A549 (cell line): ENCODE measurements at regions of chr3 and their contacts with region 1.

Region 1: DNA sequence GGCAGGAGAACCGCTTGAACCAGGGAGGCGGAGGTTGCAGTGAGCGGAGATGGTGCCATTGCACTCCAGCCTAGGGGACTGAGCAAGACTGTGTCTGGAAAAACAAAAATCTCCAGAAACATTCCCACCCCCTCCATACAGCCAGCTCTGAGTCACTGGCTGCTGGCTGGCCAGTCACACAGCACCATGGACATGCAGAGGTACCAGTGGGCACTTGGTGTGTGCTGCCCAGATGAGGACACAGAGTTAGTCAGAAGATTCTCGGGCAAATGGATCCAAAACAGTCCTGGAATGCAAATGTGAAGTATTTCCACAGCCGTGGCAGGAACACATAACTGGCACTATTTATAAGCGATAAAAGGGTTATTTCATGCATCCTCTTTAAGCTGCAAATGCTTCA is 44.6 kb downstream of the BDH1 start:
- DNase-seq: no peak
- ATAC-seq: peak in 1 of 2 experiments; percentile 9; a peak in 2 of 6 replicates
- H3K4me3 ChIP-seq: no peak overlapping the region
- H3K27ac ChIP-seq: peak overlapping the region; percentile 17 to 87; a peak in 2 of 6 replicates
- H3K4me1 ChIP-seq: peaks cover 19% of the 10 kb centered on the region; the same call in 2 of the 3 replicates
- CTCF ChIP-seq: no peak
- EP300 ChIP-seq: no peak
- POLR2A ChIP-seq: no peak
- RAD21 ChIP-seq: no peak

Region 2: GRCh38 chr3:197224034-197224444 is 287.1 kb before region 1 on chr3:
- CTCF ChIA-PET with region 1: interaction called, 12 read pairs
- POLR2A ChIA-PET with region 1: no interaction called
- DNase-seq: peak; percentile 39 to 50
- ATAC-seq: peak; percentile 50 to 75; a peak in 4 of 6 replicates
- H3K4me3 ChIP-seq: no peak overlapping the region
- H3K27ac ChIP-seq: no peak overlapping the region
- H3K4me1 ChIP-seq: peaks cover 49% of the 10 kb centered on the region
- CTCF ChIP-seq: peak; percentile 60
- EP300 ChIP-seq: no peak
- POLR2A ChIP-seq: no peak
- RAD21 ChIP-seq: peak; percentile 60 to 70

Region 3: DNA sequence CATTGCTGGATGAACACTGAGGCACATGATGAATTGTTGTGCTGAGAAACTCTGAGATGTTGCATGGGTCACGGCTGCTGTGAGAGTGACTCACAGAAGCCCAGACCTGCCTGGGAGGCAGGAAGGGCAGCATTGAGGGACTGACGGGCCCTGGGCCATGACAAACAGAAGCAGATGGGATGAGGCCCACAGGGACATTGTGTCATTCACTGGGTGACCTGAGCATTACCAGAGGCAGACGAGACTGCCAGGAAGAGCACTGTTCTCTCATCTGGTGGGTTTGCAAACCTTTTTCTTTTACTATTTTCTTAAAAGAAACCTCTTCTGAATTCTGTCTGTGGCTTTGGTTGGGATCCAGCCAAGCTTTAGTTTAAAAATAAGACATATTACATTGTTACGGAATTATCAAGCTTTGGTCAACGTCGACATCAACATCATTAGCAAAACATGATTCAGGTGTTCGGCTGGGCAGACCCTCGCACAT is 23.2 kb before region 1 on chr3:
- CTCF ChIA-PET with region 1: interaction called, 26 read pairs
- POLR2A ChIA-PET with region 1: no interaction called
- DNase-seq: peak; percentile 51 to 79
- ATAC-seq: peak; percentile 75 to 82
- H3K4me3 ChIP-seq: no peak overlapping the region
- H3K27ac ChIP-seq: peak overlapping the region; percentile 81 to 91
- H3K4me1 ChIP-seq: peaks cover 47% of the 10 kb centered on the region
- CTCF ChIP-seq: no peak
- EP300 ChIP-seq: peak in 1 of 2 experiments; percentile 48; a peak in 1 of 5 replicates
- POLR2A ChIP-seq: no peak
- RAD21 ChIP-seq: no peak